Heart right ventricle (tissue), 16 donors: ENCODE measurements at regions of chr7 and their contacts with region 1.

Region 1: GRCh38 chr7:106176414-106177299 is 64.5 kb upstream of the SYPL1 start:
- DNase-seq: peak; percentile 80 to 84
- ATAC-seq: peak; percentile 84 to 94 (median 91)
- H3K4me3 ChIP-seq: no peak overlapping the region
- H3K27ac ChIP-seq: peak overlapping the region in 6 of 10 donors; percentile 11 to 73 (median 38)
- H3K4me1 ChIP-seq: peaks cover 3 to 41% (median 18%) of the 10 kb centered on the region in 9 donors
- H3K27me3 ChIP-seq: peaks cover 0 to 10% (median 0%) of the 10 kb centered on the region in 7 donors
- CTCF ChIP-seq: peak; percentile 87 to 99 (median 95)

Region 2: DNA sequence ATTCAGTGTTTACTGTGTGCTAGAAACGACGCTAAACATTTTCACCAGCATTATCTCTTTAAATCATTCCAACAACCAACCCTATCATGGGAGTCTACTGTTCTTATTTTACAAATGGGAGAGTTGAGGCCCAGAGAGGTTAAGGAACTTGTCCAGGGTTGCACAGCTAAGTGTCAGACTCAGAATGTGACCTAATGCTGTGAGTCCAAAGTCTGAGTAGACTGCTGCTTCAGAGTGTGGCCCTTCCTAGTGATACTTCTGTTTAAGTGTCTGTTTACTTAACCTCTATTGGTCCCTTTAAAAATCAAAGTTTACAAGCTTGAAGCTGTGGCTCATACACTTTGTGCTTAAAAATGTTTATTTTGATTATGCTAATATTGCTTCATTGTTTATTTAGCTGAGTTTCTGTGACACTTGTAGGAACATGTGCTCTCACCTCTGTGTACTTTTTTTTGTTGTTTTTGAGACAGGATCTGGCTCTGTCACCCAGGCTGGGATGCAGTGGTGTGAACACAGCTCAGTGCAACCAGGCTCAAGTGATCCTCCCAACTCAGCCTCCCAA is 19.9 kb after region 1 on chr7:
- intact Hi-C with region 1: loop called in 1 of 10 experiments (anchors 1 kb)
- DNase-seq: no peak
- ATAC-seq: no peak
- H3K4me3 ChIP-seq: no peak overlapping the region
- H3K27ac ChIP-seq: no peak overlapping the region
- H3K4me1 ChIP-seq: peaks cover 0 to 17% (median 12%) of the 10 kb centered on the region in 9 donors
- H3K27me3 ChIP-seq: no peaks in the 10 kb centered on the region
- CTCF ChIP-seq: no peak

Region 3: DNA sequence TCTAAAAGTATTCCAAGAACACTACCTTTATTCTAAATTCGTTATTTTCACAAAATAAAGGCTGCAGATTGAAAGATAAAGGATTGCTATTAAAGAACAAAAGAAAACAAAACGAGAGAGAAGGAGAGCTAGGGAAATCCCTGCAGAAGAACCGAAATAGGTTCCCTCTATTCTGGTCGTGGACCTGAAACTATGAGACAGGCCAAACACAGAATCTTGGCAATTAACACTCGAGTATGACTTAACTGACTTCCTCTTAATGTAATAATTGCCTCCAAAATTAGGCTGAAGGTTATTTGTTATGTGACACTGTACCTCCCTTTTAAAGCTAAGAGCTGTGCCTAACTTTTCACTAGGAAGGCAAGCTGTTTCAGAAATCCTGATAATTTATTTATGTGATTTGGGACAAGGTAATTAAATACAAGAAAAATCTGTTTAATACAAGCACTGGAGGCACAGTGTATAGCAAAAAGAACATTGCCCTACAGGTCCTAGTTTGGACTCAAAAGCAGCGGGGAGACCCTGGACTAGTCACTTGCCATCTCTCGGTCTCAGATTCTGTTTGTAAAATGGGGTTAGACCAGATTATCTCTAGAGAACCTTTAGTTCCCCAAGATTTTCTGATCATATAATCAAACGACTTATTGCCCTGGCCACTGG is 96.5 kb after region 1 on chr7:
- intact Hi-C with region 1: loop called in 3 of 10 experiments (anchors 5 to 10 kb)
- DNase-seq: no peak
- ATAC-seq: peak in 6 of 8 donors; percentile 28 to 71 (median 48)
- H3K4me3 ChIP-seq: no peak overlapping the region
- H3K27ac ChIP-seq: peak overlapping the region in 7 of 10 donors; percentile 2 to 57 (median 45)
- H3K4me1 ChIP-seq: peaks cover 0 to 64% (median 26%) of the 10 kb centered on the region in 9 donors
- H3K27me3 ChIP-seq: no peaks in the 10 kb centered on the region
- CTCF ChIP-seq: no peak

Region 4: DNA sequence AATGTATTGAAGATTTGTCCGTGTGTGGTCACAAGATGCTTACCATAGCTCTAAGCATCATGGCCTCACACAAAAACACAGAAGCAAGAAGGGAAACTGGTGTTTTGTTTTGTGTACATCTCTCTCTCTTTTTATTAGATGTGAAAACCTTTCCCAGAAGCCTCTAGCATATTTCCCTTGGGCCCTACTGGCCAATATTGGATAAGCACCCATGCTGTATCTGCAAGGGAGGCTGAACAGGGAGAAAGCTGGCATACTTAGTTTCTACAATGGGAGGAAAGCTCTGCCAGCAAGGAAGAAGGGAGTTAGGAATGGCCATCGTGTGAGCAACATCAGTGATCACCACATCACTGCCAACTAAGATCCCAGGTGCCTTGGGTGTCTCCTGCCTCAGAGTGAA is 117.7 kb after region 1 on chr7:
- intact Hi-C with region 1: loop called in 2 of 10 experiments (anchors 5 kb)
- DNase-seq: no peak
- ATAC-seq: no peak
- H3K4me3 ChIP-seq: no peak overlapping the region
- H3K27ac ChIP-seq: no peak overlapping the region
- H3K4me1 ChIP-seq: no peaks in the 10 kb centered on the region
- H3K27me3 ChIP-seq: no peaks in the 10 kb centered on the region
- CTCF ChIP-seq: peak in 1 of 9 donors; percentile 17

Region 5: DNA sequence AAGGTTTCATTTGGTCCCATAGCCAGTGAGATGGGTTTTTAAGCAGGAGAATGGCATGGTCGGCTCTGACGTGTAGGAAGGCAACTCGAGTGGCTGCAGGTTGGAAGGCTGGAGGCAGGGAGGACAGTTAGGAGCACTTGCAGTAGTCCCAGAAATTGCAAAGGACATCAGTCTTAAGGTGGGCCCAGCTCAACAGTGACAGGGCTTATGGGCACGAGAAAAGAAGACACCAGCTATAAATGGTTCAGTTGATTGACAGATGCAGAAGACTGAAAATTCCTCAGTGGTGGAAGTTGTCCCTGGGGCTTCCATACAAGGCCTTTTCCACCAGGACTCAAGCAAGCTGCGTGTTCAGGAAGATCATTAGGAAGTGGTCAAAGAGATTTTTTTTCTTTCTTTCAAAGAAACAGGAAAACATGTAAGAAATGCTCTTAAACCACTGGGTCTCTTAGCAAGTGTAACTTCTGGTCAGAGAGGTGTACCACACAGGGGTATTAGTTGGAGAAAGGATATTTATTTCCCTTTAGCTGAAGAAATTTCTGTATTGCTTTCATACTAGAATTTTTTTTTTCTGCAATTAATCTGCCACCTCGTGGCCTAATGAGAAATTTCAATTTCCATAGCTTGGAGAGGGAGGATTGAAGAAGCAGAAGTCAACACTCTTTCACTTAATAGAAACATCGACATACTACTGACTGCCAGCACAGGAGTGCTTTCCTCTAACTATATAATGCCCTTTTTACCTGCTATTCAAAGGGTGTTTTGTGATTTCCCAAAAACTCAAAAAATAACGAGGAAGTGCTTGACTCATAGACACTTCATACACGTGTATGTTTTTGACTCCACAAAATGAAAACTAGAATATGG is 285.6 kb after region 1 on chr7:
- intact Hi-C with region 1: loop called (anchors 1 to 2 kb)
- DNase-seq: no peak
- ATAC-seq: peak in 4 of 8 donors; percentile 30 to 42 (median 38)
- H3K4me3 ChIP-seq: no peak overlapping the region
- H3K27ac ChIP-seq: peak overlapping the region in 1 of 10 donors; percentile 58
- H3K4me1 ChIP-seq: peaks cover 0 to 20% (median 3%) of the 10 kb centered on the region in 9 donors
- H3K27me3 ChIP-seq: no peaks in the 10 kb centered on the region
- CTCF ChIP-seq: peak; percentile 34 to 76 (median 65)

Region 6: GRCh38 chr7:106731187-106731586 is 554.5 kb after region 1 on chr7:
- intact Hi-C with region 1: loop called in 9 of 10 experiments (anchors 2 to 10 kb)
- DNase-seq: peak in 1 of 2 donors; percentile 16
- ATAC-seq: peak in 7 of 8 donors; percentile 23 to 88 (median 70)
- H3K4me3 ChIP-seq: no peak overlapping the region
- H3K27ac ChIP-seq: peak overlapping the region in 5 of 10 donors; percentile 5 to 58 (median 42)
- H3K4me1 ChIP-seq: peaks cover 6 to 33% (median 14%) of the 10 kb centered on the region in 9 donors
- H3K27me3 ChIP-seq: no peaks in the 10 kb centered on the region
- CTCF ChIP-seq: no peak